ENCODE measurements at regions of chr12 and their contacts with region 1.

Region 1: DNA sequence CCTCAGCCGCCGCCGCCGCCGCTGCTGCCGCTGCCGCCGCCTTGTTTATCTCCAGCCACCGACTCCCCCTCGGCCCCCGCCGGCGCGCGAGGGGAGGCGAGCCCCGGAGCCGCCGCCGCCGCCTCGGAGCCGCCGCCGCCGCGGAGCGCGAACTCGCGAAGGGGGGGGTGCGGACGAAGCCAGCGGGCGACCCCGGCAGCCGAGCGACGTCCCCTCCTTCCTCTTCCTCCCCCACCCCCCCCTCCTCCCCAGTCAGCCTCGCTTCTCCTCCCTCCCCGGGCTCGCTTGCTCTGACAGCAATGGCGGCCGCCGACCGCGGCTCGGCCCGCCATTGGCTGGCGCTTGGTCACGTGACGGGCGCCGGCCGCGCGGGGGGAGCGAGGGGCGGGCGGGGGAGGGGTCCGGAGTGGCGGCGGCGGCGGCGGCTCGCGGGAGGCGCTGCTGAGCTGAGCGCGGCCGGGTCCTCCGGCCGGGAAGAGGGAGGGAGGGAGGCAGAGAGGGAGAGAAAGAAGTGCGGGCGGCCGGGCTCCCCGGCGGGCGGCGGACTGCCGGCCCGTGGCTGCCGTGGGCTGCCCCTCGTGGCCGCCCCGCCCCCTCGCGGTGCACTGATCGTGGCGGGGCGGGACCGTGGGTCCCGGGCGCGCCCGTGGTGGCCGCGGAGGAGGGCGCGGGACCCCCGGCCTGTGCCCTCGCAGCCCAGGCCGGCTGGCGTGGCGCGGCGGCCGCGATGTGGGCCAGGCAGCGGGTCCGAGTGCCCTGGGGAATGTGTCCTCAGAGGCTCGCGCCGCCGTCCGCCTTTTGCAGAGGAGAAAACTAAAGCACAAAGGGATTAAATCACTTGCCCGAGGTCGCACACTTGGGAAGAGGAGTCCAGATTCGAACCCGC is at the start of gene MED13L:
- DNase-seq: peak; percentile 78 to 95 (median 89)
- ATAC-seq: peak; percentile 80
- H3K4me3 ChIP-seq: peak within 1 kb of the TSS; percentile 83 to 85
- H3K4me3 Mint-ChIP-seq: peak within 1 kb of the TSS; percentile 93
- H3K27ac ChIP-seq: peak within 1 kb of the TSS; percentile 29 to 54
- H3K27ac Mint-ChIP-seq: peak within 1 kb of the TSS; percentile 91
- H3K4me1 ChIP-seq: peaks cover 34% of the 10 kb centered on the region
- H3K4me1 Mint-ChIP-seq: peaks cover 38% of the 10 kb centered on the region
- H3K27me3 ChIP-seq: no peaks in the 10 kb centered on the region
- H3K27me3 Mint-ChIP-seq: no peaks in the 10 kb centered on the region
- CTCF ChIP-seq: no peak
- total RNA-seq, gene MED13L: 157 to 159 TPM

Region 2: GRCh38 chr12:115941362-115941761 is 336.3 kb before region 1 on chr12:
- CTCF ChIA-PET with region 1: no interaction called
- POLR2A ChIA-PET with region 1: no interaction called
- intact Hi-C with region 1: no loop called
- DNase-seq: no peak
- ATAC-seq: no peak
- H3K4me3 ChIP-seq: no peak overlapping the region
- H3K4me3 Mint-ChIP-seq: no peak overlapping the region
- H3K27ac ChIP-seq: no peak overlapping the region
- H3K27ac Mint-ChIP-seq: no peak overlapping the region
- H3K4me1 ChIP-seq: no peaks in the 10 kb centered on the region
- H3K4me1 Mint-ChIP-seq: no peaks in the 10 kb centered on the region
- H3K27me3 ChIP-seq: no peaks in the 10 kb centered on the region
- H3K27me3 Mint-ChIP-seq: peaks cover 16% of the 10 kb centered on the region
- CTCF ChIP-seq: no peak

Region 3: GRCh38 chr12:116066381-116067230 is 211.0 kb before region 1 on chr12:
- CTCF ChIA-PET with region 1: interaction called, 3 read pairs
- POLR2A ChIA-PET with region 1: interaction called, 3 read pairs
- intact Hi-C with region 1: loop called in 1 of 2 experiments (anchors 2 kb)
- DNase-seq: peak; percentile 8 to 78 (median 59)
- ATAC-seq: peak; percentile 88
- H3K4me3 ChIP-seq: no peak overlapping the region
- H3K4me3 Mint-ChIP-seq: no peak overlapping the region
- H3K27ac ChIP-seq: no peak overlapping the region
- H3K27ac Mint-ChIP-seq: no peak overlapping the region
- H3K4me1 ChIP-seq: no peaks in the 10 kb centered on the region
- H3K4me1 Mint-ChIP-seq: peaks cover 26% of the 10 kb centered on the region
- H3K27me3 ChIP-seq: no peaks in the 10 kb centered on the region
- H3K27me3 Mint-ChIP-seq: no peaks in the 10 kb centered on the region
- CTCF ChIP-seq: peak; percentile 83

Region 4: GRCh38 chr12:116261525-116262100 is 16.0 kb before region 1 on chr12:
- CTCF ChIA-PET with region 1: interaction called, 4 read pairs
- POLR2A ChIA-PET with region 1: interaction called, 3 read pairs
- intact Hi-C with region 1: loop called in 1 of 2 experiments (anchors 2 kb)
- DNase-seq: no peak
- ATAC-seq: no peak
- H3K4me3 ChIP-seq: no peak overlapping the region
- H3K4me3 Mint-ChIP-seq: no peak overlapping the region
- H3K27ac ChIP-seq: no peak overlapping the region
- H3K27ac Mint-ChIP-seq: no peak overlapping the region
- H3K4me1 ChIP-seq: peaks cover 61% of the 10 kb centered on the region
- H3K4me1 Mint-ChIP-seq: peaks cover 58% of the 10 kb centered on the region
- H3K27me3 ChIP-seq: no peaks in the 10 kb centered on the region
- H3K27me3 Mint-ChIP-seq: no peaks in the 10 kb centered on the region
- CTCF ChIP-seq: no peak

Region 5: DNA sequence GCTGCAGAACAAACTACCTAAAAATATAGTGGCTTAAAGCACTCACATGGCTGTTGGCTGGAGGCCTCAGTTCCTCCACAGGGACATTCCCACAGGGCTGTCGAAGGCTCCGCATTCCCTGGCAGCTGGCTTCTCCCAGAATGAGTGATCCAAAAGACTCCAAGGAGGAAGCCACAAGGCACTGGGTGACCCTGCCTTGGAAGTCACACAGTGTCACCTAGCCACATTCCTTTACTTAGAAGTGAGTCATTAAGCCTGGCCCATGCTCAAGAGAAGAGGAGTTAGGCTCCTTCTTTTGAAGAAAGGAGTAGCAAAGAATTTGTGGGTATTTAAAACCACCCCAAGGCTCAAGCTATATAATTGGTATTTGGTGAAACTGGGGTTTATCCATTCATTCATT is 217.6 kb after region 1 on chr12:
- CTCF ChIA-PET with region 1: no interaction called
- POLR2A ChIA-PET with region 1: no interaction called
- intact Hi-C with region 1: no loop called
- DNase-seq: no peak
- ATAC-seq: no peak
- H3K4me3 ChIP-seq: no peak overlapping the region
- H3K4me3 Mint-ChIP-seq: no peak overlapping the region
- H3K27ac ChIP-seq: no peak overlapping the region
- H3K27ac Mint-ChIP-seq: no peak overlapping the region
- H3K4me1 ChIP-seq: no peaks in the 10 kb centered on the region
- H3K4me1 Mint-ChIP-seq: no peaks in the 10 kb centered on the region
- H3K27me3 ChIP-seq: no peaks in the 10 kb centered on the region
- H3K27me3 Mint-ChIP-seq: no peaks in the 10 kb centered on the region
- CTCF ChIP-seq: no peak

Region 6: DNA sequence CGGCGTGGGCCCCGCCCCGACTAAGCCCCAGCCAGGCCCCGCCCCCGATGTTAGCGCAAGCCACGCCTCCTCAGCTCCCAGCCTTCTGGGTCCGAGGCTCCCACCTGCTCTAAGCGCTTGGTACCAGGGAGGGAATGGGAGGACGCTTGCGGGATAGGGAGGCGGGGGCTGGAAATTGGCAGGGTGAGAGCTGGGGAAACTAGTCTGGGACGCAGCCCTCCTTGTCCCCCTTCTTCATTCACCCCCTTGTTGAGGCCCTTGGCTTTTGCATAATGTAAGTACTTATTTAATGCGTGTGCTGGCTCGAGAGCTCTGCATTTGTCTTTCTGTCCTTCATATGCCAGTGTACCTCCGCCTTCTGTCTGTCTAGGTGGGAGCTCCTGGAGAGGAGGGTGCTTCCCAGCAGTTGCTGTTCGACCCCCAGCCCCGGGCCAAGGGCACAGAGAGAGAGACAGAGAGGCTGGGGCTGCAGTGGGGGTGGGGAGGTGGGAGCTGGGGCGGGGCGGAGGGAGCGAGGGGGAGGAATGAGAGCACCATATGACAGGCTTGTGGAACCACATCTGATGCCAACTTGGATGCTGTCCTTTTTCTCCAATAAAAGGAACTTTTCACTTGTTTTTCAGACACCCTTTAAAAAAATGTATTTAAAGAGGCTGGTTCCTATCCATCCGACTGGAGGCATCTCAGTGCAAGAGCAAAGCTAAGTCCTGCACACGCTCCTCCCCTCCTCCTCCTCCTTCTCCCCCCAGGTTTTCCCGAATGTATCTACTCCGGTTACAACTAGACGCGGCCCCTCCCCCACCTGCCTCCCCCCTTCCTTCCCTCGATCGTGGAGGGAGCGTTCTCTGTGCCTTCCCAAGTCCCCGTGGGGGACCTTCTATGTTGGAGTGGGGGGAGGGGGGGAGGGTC is 256.0 kb after region 1 on chr12:
- CTCF ChIA-PET with region 1: no interaction called
- POLR2A ChIA-PET with region 1: no interaction called
- intact Hi-C with region 1: loop called in 1 of 2 experiments (anchors 10 kb)
- DNase-seq: peak; percentile 54 to 85 (median 77)
- ATAC-seq: peak; percentile 96
- H3K4me3 ChIP-seq: peak overlapping the region; percentile 59 to 70
- H3K4me3 Mint-ChIP-seq: peak overlapping the region; percentile 92
- H3K27ac ChIP-seq: no peak overlapping the region
- H3K27ac Mint-ChIP-seq: no peak overlapping the region
- H3K4me1 ChIP-seq: peaks cover 12% of the 10 kb centered on the region
- H3K4me1 Mint-ChIP-seq: peaks cover 18% of the 10 kb centered on the region
- H3K27me3 ChIP-seq: no peaks in the 10 kb centered on the region
- H3K27me3 Mint-ChIP-seq: no peaks in the 10 kb centered on the region
- CTCF ChIP-seq: no peak

Region 7: DNA sequence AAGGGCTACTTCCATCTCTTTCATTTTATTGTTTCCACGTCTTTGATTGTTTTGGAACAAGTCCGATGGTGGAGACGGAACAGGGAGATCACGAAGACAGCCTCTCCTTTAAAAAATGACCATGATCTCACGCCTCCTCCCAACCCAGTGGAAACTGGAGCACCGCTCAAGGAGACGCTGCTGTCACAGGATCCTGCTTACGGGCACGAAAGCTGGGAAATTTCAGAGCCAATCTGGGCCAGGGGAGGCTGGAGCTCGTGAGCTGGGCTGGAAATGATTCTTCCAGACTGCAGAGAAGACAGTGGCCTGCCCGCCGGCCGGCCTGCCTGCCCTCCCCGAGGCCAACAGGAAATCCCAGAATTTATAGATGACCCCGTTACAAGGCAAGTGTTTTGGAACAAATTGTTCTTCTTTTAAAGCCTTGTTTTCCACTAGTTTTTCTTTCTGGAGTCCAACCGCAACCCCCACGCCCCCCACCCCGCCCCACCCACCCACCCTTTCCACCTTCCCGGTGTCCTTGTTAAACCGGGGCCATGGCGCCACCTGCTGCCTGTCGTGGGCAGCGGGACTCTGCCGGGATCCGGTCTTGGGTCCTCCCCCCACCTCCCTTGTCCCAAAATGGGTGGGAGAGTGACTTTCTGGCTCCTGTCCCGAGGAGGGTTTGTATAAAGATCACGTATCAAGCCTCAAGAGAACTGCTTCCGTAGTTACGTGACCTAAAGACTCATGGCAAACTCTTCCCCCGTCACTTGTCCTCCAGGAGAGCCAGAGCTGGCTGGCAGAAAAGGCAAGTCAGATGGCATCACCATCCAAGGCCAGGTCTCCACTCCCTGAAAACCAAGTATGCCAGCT is 321.9 kb after region 1 on chr12:
- CTCF ChIA-PET with region 1: interaction called, 4 read pairs
- POLR2A ChIA-PET with region 1: no interaction called
- intact Hi-C with region 1: loop called in 1 of 2 experiments (anchors 2 kb)
- DNase-seq: peak; percentile 20 to 81 (median 62)
- ATAC-seq: peak; percentile 75
- H3K4me3 ChIP-seq: no peak overlapping the region
- H3K4me3 Mint-ChIP-seq: no peak overlapping the region
- H3K27ac ChIP-seq: no peak overlapping the region
- H3K27ac Mint-ChIP-seq: no peak overlapping the region
- H3K4me1 ChIP-seq: peaks cover 13% of the 10 kb centered on the region
- H3K4me1 Mint-ChIP-seq: peaks cover 20% of the 10 kb centered on the region
- H3K27me3 ChIP-seq: peaks cover 0 to 3% of the 10 kb centered on the region in 2 experiments
- H3K27me3 Mint-ChIP-seq: no peaks in the 10 kb centered on the region
- CTCF ChIP-seq: peak; percentile 47

Region 8: DNA sequence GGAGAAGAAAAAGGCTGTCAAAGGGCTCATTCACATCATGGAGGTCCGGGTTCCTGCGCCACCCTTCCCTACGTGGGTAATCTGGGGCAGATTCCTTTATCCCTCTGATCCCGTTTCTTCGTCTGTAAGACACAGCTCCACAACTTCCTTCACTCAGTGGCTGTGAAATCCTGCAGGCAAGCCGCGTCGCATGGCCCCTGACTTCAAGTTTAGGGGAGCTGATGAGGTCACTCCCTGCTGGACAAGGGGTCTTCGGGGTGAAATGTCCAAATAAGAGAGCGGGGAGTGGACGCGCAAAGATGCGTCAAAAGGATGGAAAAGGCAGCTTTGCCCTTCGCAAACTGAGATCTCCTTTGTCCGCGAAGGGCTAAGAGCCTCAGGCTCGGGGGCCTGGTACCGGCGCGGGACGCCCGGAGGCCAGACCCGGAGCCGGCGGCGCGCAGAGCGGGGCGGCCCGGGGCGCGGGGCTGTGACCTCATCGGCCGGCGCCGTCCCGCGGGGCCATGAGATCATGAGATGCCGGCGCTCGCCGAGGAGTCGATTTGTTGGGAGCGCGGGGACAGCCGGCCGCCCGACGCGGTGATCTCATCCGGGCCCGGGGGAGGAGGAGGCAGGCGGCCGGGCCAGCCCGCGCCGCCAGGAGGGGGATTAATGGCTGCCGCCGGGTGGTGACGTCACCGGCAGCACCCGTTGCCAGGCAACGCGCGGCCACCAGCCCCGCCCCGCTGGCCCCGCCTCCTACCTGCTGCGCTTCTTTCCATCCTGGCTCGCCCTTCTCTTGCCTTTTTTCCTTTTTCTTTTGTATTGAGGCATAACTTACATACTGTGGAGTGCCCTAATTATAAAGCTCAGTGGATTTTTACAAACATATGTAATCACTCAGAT is 541.6 kb after region 1 on chr12:
- CTCF ChIA-PET with region 1: no interaction called
- POLR2A ChIA-PET with region 1: no interaction called
- intact Hi-C with region 1: loop called in 1 of 2 experiments (anchors 2 kb)
- DNase-seq: peak; percentile 82 to 96 (median 91)
- ATAC-seq: peak; percentile 88
- H3K4me3 ChIP-seq: peak overlapping the region; percentile 70 to 93
- H3K4me3 Mint-ChIP-seq: peak overlapping the region; percentile 89
- H3K27ac ChIP-seq: peak overlapping the region; percentile 83 to 95
- H3K27ac Mint-ChIP-seq: peak overlapping the region; percentile 96
- H3K4me1 ChIP-seq: peaks cover 18% of the 10 kb centered on the region
- H3K4me1 Mint-ChIP-seq: peaks cover 21% of the 10 kb centered on the region
- H3K27me3 ChIP-seq: peaks cover 0 to 2% of the 10 kb centered on the region in 2 experiments
- H3K27me3 Mint-ChIP-seq: peaks cover 2% of the 10 kb centered on the region
- CTCF ChIP-seq: no peak

Region 9: GRCh38 chr12:117190210-117190781 is 912.7 kb after region 1 on chr12 and contains the start of gene FBXO21:
- CTCF ChIA-PET with region 1: no interaction called
- POLR2A ChIA-PET with region 1: no interaction called
- intact Hi-C with region 1: loop called in 1 of 2 experiments (anchors 5 kb)
- DNase-seq: peak; percentile 90 to 98 (median 93)
- ATAC-seq: peak; percentile 96
- H3K4me3 ChIP-seq: peak within 1 kb of the TSS; percentile 49 to 87
- H3K4me3 Mint-ChIP-seq: peak within 1 kb of the TSS; percentile 93
- H3K27ac ChIP-seq: peak within 1 kb of the TSS; percentile 69 to 83
- H3K27ac Mint-ChIP-seq: peak within 1 kb of the TSS; percentile 92
- H3K4me1 ChIP-seq: peaks cover 22% of the 10 kb centered on the region
- H3K4me1 Mint-ChIP-seq: peaks cover 31% of the 10 kb centered on the region
- H3K27me3 ChIP-seq: no peaks in the 10 kb centered on the region
- H3K27me3 Mint-ChIP-seq: no peaks in the 10 kb centered on the region
- CTCF ChIP-seq: no peak
- total RNA-seq, gene FBXO21: 77.7 to 87.7 TPM

Measured in CD8-positive, alpha-beta T cell (primary cell).